HepG2 (cell line): ENCODE measurements at regions of chr3 and their contacts with region 1.

Region 1: DNA sequence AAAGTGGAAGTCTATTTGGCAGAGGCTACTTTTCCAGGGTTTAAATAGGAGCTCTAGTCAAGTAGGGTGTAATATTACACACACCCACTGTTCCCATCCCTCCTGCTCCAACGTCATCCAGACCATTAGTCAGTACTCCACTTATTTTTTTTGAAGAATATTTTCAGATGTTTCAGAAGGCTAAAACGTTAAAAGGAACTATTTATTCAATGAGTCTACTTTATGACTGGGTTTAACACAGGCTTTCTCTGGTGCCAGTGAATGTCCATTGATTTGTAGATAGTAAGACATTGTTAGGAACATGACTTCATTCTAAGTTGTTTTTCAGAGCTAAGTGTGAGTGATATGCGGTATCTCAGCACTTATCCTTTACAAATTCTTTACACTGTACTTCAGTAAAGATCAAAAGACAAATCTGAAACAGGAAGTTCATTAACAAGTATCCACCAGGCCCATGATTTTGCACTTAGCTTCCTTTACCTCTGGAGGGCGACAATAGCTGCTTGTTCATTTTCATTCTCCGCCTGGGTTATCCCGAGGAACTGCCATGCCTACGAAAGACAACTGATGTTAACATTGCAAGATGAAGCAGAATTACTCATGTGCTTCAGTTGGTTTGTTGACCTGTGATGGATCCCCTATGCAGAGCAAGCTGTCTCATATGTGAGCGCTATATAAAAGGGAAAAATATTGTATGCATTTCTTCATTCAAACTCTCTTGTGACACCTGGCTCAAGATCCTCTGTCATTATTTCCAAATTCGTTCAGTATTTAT is 158.7 kb downstream of the USP13 start:
- DNase-seq: peak; percentile 46
- ATAC-seq: peak; percentile 89
- H3K4me3 ChIP-seq: no peak overlapping the region
- H3K27ac ChIP-seq: no peak overlapping the region
- H3K4me1 ChIP-seq: peaks cover 19% of the 10 kb centered on the region
- H3K27me3 ChIP-seq: no peaks in the 10 kb centered on the region
- CTCF ChIP-seq: peak; percentile 80
- EP300 ChIP-seq: no peak
- POLR2A ChIP-seq: no peak
- RAD21 ChIP-seq: peak; percentile 52

Region 2: DNA sequence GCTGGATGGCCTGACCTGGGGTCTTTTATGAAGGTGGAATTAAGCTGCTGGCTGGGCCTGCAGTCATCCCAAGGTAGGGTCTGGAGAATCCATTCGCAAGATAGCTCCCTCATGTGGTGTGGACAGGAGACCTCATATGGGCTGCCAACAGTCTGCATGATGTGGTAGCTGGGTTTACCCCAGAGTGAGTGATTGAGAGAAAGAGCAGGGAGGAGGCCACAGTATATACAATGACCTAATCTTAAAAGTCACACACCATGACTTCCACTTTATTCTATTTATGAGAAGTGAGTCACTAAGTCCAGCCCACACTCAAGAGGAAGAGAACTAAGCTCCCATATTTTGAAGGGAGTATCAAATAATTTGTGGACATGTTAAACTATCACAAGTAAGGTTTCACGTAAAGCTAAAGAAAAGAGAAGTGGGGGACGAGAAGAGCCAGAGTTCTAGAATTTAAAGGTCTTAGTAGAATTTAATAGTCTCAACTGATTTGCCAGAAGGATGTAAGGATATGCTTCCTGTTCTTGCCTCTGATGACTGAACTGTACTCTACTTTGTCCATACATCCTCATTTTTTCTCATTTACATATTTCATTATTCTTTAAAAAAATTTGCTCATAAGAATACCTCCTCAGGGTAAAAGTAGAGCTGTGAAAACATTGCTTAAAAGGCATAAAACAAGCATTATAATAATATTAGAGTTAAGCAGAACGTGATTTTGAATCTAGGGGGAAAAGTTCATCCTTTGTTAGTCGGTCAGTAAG is 40.8 kb after region 1 on chr3:
- CTCF ChIA-PET with region 1: interaction called, 3 read pairs
- POLR2A ChIA-PET with region 1: no interaction called
- in situ Hi-C with region 1: no loop called
- intact Hi-C with region 1: loop called (anchors 1 kb)
- DNase-seq: peak; percentile 10
- ATAC-seq: peak; percentile 97
- H3K4me3 ChIP-seq: no peak overlapping the region
- H3K27ac ChIP-seq: no peak overlapping the region
- H3K4me1 ChIP-seq: no peaks in the 10 kb centered on the region
- H3K27me3 ChIP-seq: no peaks in the 10 kb centered on the region
- CTCF ChIP-seq: peak; percentile 48
- EP300 ChIP-seq: no peak
- POLR2A ChIP-seq: no peak
- RAD21 ChIP-seq: no peak

Region 3: DNA sequence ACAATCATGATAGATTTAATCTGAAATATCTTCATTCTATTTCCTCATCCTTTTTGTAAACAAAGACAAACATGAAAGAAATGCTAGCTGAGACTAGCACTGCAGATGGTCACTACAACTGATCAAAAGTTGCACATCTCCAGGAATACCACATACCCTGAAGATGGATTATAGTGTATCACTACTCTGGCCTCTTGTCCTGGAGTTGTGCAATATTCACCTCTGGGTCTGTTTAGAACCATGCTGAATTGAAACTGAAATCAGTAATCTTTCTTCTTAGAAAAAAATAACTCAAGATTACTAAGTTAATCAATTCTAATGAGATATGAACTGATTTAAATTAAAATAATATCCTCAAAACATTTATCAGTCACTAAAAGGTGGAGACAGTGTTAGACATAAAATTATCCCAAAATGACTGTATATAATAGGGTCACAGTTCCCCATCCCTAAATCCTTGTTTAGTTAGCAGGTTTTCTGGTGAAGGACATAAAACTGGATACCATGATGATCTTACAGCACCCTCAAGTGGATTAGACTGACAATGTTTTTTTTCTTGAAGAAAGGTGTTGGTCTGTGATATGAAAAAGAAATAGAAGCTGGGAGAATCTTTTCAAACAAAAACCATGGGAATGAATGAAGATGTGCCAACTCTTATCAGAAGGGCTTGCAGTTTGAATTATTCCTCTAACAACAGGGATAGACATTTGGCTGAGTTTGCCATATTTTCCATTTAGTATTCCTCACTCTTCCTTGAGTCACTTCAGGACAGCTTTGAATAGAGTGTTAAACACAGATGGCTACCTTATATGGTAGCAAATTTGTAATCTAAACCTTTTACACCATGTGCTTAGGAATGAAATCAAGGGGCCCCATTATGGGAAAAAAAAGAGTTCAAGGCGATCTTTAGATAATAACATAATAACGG is 783.4 kb after region 1 on chr3:
- CTCF ChIA-PET with region 1: no interaction called
- POLR2A ChIA-PET with region 1: no interaction called
- in situ Hi-C with region 1: loop called (anchors 25 kb)
- intact Hi-C with region 1: loop called (anchors 1 kb)
- DNase-seq: peak; percentile 13
- ATAC-seq: 0 out of 3 replicates have a peak, but pooled peaks have one; percentile 29
- H3K4me3 ChIP-seq: no peak overlapping the region
- H3K27ac ChIP-seq: no peak overlapping the region
- H3K4me1 ChIP-seq: no peaks in the 10 kb centered on the region
- H3K27me3 ChIP-seq: no peaks in the 10 kb centered on the region; a peak in 1 of 5 replicates
- CTCF ChIP-seq: peak; percentile 59
- EP300 ChIP-seq: no peak
- POLR2A ChIP-seq: no peak
- RAD21 ChIP-seq: no peak